ENCODE measurements at regions of chr1 and their contacts with region 1.

Region 1: GRCh38 chr1:17949511-17949910 is 158.1 kb upstream of the IGSF21 start:
- DNase-seq: no peak
- H3K4me3 ChIP-seq: no peak overlapping the region
- H3K27ac ChIP-seq: no peak overlapping the region
- H3K4me1 ChIP-seq: no peaks in the 10 kb centered on the region
- CTCF ChIP-seq: no peak

Region 2: DNA sequence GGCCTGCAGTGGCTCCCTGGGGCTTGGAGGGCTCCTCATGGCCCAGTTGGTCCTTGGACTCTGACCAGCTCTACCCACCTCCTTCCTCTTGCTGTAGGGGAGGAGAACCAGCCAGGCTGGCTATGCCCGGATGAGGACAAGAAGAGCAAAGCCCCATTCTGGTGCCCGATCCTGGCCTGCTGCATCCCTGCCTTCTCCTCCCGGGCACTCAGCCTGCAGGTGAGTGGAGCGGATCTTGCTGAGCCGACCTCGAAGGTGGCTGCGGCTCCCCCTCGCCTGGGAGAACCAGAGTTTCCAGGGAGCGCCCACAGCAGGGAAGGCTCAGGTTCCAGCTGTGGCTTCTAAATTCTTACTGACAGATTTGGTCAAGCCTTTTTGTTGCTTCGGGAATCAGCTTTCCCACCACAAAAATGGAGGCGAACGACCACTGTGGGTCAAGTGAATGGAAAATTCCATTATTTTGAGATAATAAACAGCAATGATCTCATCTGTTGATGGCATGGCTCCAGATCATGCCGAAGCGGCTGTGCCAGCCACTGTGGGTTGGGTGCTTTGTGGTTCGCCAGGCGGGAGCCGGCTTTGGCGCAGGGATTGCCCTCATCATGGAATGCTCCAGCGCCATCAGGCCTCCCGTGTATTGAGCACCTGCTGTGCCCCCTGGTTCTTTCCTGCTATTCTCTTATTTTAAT is 300.9 kb before region 1 on chr1:
- CTCF ChIA-PET with region 1: no interaction called
- POLR2A ChIA-PET with region 1: no interaction called
- intact Hi-C with region 1: no loop called
- DNase-seq: no peak
- H3K4me3 ChIP-seq: no peak overlapping the region
- H3K27ac ChIP-seq: no peak overlapping the region
- H3K4me1 ChIP-seq: no peaks in the 10 kb centered on the region
- CTCF ChIP-seq: no peak

Region 3: GRCh38 chr1:17909634-17910033 is 39.9 kb before region 1 on chr1:
- CTCF ChIA-PET with region 1: no interaction called
- POLR2A ChIA-PET with region 1: no interaction called
- intact Hi-C with region 1: no loop called
- DNase-seq: no peak
- H3K4me3 ChIP-seq: no peak overlapping the region
- H3K27ac ChIP-seq: no peak overlapping the region
- H3K4me1 ChIP-seq: no peaks in the 10 kb centered on the region
- CTCF ChIP-seq: 0 out of 2 replicates have a peak, but pooled peaks have one; percentile 33

Region 4: GRCh38 chr1:18118491-18118890 is 169.0 kb after region 1 on chr1:
- CTCF ChIA-PET with region 1: no interaction called
- POLR2A ChIA-PET with region 1: interaction called, 11 read pairs
- intact Hi-C with region 1: no loop called
- DNase-seq: no peak
- H3K4me3 ChIP-seq: no peak overlapping the region
- H3K27ac ChIP-seq: no peak overlapping the region
- H3K4me1 ChIP-seq: no peaks in the 10 kb centered on the region
- CTCF ChIP-seq: no peak

Measured in OCI-LY7 (cell line).